ENCODE measurements at regions of chr20 and their contacts with region 1.

Region 1: DNA sequence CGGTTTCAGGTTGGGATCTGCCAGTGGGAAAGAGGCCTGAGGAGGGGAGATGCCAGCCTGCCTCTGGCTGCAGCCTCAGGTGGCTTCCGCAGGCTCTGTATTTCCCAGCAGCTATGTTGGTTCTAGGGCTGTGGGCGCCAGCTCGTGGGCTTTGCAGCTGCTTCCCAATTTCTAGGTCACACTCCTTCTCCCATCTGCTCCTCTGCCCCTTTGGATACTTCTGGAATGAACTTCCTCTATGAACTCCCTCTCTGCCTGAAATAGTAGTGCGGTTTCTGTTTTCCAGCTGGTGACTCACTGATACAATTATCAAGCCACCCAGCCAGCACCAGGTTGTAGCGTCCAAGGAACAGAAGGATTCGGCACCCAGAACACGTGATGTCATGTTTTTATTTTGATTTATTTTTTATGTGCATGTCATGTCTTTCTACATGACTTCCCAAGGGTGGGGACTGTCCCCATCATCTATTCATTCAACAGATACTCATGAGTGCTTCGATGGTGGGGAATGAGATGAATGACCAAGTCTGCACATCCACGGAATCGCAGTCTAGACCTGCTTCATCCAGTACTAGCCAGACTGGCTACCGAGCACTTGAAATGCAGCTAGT is 38.0 kb downstream of the TGM2 start:
- DNase-seq: peak in 1 of 2 donors; percentile 81
- H3K4me3 ChIP-seq: no peak overlapping the region
- H3K27ac ChIP-seq: peak overlapping the region; percentile 85 to 87
- H3K4me1 ChIP-seq: peaks cover 15 to 30% of the 10 kb centered on the region in 2 donors
- H3K27me3 ChIP-seq: no peaks in the 10 kb centered on the region
- CTCF ChIP-seq: no peak

Region 2: GRCh38 chr20:38073307-38074071 is 53.6 kb before region 1 on chr20:
- intact Hi-C with region 1: loop called (anchors 1 kb)
- DNase-seq: peak in 1 of 2 donors; percentile 86
- H3K4me3 ChIP-seq: no peak overlapping the region
- H3K27ac ChIP-seq: peak overlapping the region; percentile 86
- H3K4me1 ChIP-seq: peaks cover 18 to 34% of the 10 kb centered on the region in 2 donors
- H3K27me3 ChIP-seq: no peaks in the 10 kb centered on the region
- CTCF ChIP-seq: peak; percentile 64 to 88 (median 80)

Region 3: GRCh38 chr20:38143646-38144554 is 16.8 kb after region 1 on chr20:
- intact Hi-C with region 1: loop called (anchors 2 kb)
- DNase-seq: peak; percentile 82 to 93
- H3K4me3 ChIP-seq: no peak overlapping the region
- H3K27ac ChIP-seq: peak overlapping the region; percentile 84 to 95
- H3K4me1 ChIP-seq: peaks cover 10 to 16% of the 10 kb centered on the region in 2 donors
- H3K27me3 ChIP-seq: no peaks in the 10 kb centered on the region
- CTCF ChIP-seq: no peak